ENCODE measurements at regions of chr20 and their contacts with region 1.

Region 1: GRCh38 chr20:54649511-54649962 is 174.1 kb downstream of the DOK5 start:
- DNase-seq: peak in 2 of 3 donors; percentile 73 to 91
- ATAC-seq: peak; percentile 71
- H3K4me3 ChIP-seq: no peak overlapping the region
- H3K4me1 ChIP-seq: no peaks in the 10 kb centered on the region
- CTCF ChIP-seq: peak; percentile 49

Region 2: GRCh38 chr20:54219751-54220426 is 429.6 kb before region 1 on chr20:
- intact Hi-C with region 1: loop called (anchors 10 kb)
- DNase-seq: no peak
- ATAC-seq: no peak
- H3K4me3 ChIP-seq: no peak overlapping the region
- H3K4me1 ChIP-seq: no peaks in the 10 kb centered on the region
- CTCF ChIP-seq: no peak

Measured in mucosa of descending colon (tissue), 3 donors.